ENCODE measurements at regions of chr6 and their contacts with region 1.

Region 1: DNA sequence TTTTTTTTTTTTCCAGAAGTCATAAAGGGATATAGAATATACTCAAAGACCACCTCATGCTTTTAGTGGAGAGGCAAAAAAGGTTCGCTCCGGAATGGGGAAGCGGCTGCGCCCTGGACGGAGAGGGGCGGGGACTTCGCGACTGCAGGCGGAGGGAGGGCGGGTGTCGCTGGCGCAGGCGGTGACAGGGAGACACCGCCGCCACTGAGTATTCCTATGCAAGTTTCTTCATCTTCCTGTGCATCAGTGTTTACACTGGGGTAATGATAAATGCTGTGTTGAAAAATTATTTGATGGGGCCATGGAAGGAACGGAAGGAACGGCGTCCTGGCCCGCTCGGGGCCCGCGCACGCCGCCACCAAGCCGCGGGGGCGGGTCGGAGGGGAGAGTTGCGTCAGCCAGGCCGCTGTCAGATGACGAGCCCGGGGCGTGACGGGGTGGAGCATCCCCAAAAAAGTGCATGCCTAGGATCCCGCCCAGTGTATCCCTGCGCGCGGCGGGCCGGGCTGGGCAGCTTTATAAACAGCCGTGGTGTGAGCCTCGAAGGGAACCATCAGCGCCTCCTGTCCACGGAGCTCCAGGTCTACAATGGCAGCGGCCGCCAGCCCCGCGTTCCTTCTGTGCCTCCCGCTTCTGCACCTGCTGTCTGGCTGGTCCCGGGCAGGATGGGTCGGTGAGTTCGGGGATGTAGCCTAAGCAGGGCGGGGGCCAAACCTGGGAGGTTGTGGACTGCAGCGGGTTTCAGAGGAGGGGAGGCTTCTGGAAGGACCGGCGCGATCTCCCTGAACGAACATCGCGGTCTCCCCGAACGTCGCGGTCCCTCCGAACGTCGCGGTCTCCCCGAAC is at the start of gene ULBP1:
- DNase-seq: peak; percentile 93
- ATAC-seq: peak; percentile 76
- H3K4me3 Mint-ChIP-seq: peak within 1 kb of the TSS; percentile 77
- H3K27ac Mint-ChIP-seq: peak within 1 kb of the TSS; percentile 91
- H3K4me1 Mint-ChIP-seq: peaks cover 22% of the 10 kb centered on the region
- H3K27me3 Mint-ChIP-seq: peaks cover 69% of the 10 kb centered on the region
- total RNA-seq, gene ULBP1: 2.7 to 5.0 TPM

Region 2: DNA sequence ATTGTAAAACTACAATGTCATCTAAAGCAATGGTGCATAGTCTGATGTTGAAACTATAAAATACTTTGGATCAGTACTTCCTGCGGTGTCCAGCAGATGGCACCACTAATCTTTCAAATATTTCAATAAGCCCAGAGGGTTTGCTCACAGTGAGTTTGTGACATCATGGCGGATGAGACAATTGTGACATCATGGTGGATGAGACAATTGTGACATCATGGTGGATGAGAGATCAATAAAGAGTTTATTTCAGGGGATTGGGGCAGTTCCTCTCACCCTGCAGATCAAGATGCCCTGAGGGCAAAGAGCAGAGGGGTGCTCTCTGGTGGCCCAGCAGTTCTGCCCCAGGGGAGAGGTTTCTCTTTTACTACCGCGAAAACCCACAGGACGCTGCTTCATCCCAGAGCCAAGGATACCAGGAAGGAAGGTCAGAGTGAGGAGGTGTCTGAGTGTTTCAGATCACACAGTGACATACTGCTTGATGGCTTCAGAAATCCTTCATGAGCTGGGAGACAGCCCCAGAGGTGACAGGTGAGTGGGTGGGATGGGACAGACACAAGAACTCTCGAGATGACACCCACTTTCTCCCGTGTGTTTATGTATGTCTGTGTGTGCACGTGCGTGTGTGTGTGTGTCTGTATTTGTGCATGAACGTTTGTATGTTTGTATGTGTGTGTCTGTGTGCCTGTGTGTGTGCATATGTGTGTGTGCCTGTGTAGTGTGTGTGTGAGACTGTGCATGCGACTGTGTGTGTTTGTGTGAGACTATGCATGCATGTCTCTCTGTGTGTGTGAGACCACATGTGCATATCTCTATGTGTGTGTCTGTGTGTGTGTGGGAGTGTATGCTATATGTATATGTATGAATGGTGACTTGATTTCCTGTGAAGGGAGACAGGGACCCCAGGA is 29.2 kb before region 1 on chr6:
- CTCF ChIA-PET with region 1: interaction called, 3 read pairs
- POLR2A ChIA-PET with region 1: no interaction called
- intact Hi-C with region 1: loop called in 1 of 2 experiments (anchors 1 kb)
- DNase-seq: peak; percentile 84
- ATAC-seq: peak; percentile 57
- H3K4me3 Mint-ChIP-seq: no peak overlapping the region
- H3K27ac Mint-ChIP-seq: no peak overlapping the region
- H3K4me1 Mint-ChIP-seq: peaks cover 21% of the 10 kb centered on the region
- H3K27me3 Mint-ChIP-seq: peaks cover 74% of the 10 kb centered on the region

Region 3: DNA sequence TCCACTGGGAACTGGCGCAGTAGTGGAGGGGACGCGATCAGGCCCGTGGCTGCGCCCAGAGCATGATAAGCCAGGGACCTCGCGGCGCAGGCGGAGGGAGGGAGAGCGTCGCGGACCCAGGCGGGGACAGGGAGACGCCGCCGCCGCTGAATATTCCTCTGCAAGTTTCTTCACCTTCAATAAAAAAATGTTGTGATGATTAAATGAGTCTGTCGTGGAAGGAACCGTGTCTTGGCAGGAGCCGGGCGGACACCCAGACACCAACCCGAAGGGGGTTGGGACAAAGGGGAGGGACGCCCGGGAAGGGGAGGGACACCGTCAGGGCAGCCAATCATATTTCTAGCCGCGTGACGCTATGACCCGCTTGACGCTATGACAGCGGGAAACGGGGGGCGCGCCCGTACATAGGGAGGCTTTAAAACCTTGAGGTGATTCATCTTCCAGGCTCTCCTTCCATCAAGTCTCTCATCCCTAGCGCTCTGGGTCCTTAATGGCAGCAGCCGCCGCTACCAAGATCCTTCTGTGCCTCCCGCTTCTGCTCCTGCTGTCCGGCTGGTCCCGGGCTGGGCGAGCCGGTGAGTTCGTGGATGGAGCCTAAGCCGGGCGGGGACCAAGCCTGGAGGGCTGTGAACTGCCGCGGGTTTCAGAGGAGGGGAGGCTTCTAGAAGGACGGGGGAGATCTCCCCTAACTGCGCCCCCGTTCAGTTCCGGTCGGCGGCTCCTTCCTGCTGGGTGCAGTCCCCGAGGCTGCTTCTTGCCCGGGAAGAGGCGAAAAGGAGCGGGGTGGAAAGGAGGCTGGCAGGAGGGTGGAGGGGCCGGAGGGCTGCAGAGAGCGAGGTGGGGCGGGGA is 21.9 kb before region 1 on chr6 and contains the start of gene ULBP2:
- CTCF ChIA-PET with region 1: interaction called, 3 read pairs
- POLR2A ChIA-PET with region 1: no interaction called
- intact Hi-C with region 1: loop called (anchors 1 kb)
- DNase-seq: peak; percentile 91
- ATAC-seq: peak; percentile 92
- H3K4me3 Mint-ChIP-seq: peak within 1 kb of the TSS; percentile 77
- H3K27ac Mint-ChIP-seq: no peak within 1 kb of the TSS
- H3K4me1 Mint-ChIP-seq: peaks cover 25% of the 10 kb centered on the region
- H3K27me3 Mint-ChIP-seq: peaks cover 51% of the 10 kb centered on the region
- total RNA-seq, gene ULBP2: 0.32 to 0.43 TPM

Region 4: DNA sequence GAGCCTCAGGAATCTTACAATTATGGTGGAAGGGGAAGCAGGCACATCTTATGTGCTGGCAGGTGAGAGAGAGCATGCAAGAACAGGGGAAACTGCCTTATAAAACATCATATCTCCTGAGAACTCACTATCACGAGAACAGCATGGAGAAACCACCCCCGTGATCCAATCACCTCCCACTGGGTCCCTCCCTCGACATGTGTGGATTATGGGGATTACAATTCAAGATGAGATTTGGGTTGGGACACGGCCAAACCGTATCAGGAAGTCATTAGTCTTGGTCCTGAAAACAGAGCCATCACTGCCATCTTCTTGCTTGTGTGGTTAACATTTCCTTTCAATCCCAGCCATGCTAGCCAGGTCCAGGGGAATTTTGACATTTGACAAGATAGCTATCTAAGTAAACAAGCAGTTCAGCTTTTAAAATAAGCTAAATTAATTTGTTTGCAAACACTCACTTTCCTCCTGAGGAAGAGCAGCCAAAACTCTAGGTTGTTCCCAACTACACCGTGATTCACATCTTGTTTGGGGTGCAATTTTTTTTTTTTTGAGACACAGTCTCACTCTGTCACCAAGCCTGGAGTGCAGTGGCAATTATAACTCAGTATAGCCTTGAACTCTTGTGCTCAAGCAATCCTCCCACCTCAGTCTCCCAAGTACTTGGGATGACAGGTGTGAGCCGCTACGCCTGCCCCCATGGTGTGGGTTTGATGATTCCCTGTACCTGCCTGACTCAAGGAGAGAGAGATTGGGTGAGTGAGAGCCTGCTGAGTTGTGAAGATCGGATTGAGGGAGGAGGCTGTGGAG is 166.1 kb after region 1 on chr6:
- CTCF ChIA-PET with region 1: no interaction called
- POLR2A ChIA-PET with region 1: no interaction called
- intact Hi-C with region 1: no loop called
- DNase-seq: no peak
- ATAC-seq: no peak
- H3K4me3 Mint-ChIP-seq: no peak overlapping the region
- H3K27ac Mint-ChIP-seq: no peak overlapping the region
- H3K4me1 Mint-ChIP-seq: no peaks in the 10 kb centered on the region
- H3K27me3 Mint-ChIP-seq: peaks cover 15% of the 10 kb centered on the region

Region 5: GRCh38 chr6:150586850-150587359 is 623.2 kb after region 1 on chr6:
- CTCF ChIA-PET with region 1: no interaction called
- POLR2A ChIA-PET with region 1: no interaction called
- intact Hi-C with region 1: no loop called
- DNase-seq: no peak
- ATAC-seq: no peak
- H3K4me3 Mint-ChIP-seq: no peak overlapping the region
- H3K27ac Mint-ChIP-seq: no peak overlapping the region
- H3K4me1 Mint-ChIP-seq: no peaks in the 10 kb centered on the region
- H3K27me3 Mint-ChIP-seq: peaks cover 4% of the 10 kb centered on the region

Region 6: GRCh38 chr6:150865406-150866146 is 901.9 kb after region 1 on chr6 and contains the start of gene MTHFD1L:
- CTCF ChIA-PET with region 1: no interaction called
- POLR2A ChIA-PET with region 1: no interaction called
- intact Hi-C with region 1: loop called in 1 of 2 experiments (anchors 2 kb)
- DNase-seq: peak; percentile 89
- ATAC-seq: peak; percentile 74
- H3K4me3 Mint-ChIP-seq: peak within 1 kb of the TSS; percentile 81
- H3K27ac Mint-ChIP-seq: peak within 1 kb of the TSS; percentile 94
- H3K4me1 Mint-ChIP-seq: peaks cover 38% of the 10 kb centered on the region
- H3K27me3 Mint-ChIP-seq: peaks cover 12% of the 10 kb centered on the region
- total RNA-seq, gene MTHFD1L: 103 to 129 TPM